Mammary epithelial cell (primary cell): ENCODE measurements at regions of chr9 and their contacts with region 1.

Region 1: GRCh38 chr9:94603259-94604160 is 9.9 kb upstream of the FBP2 start:
- DNase-seq: peak; percentile 70
- H3K4me3 ChIP-seq: no peak overlapping the region
- H3K27ac ChIP-seq: no peak overlapping the region
- H3K4me1 ChIP-seq: no peaks in the 10 kb centered on the region
- H3K27me3 ChIP-seq: peaks cover 5% of the 10 kb centered on the region
- CTCF ChIP-seq: peak; percentile 63 to 85

Region 2: GRCh38 chr9:94014065-94014654 is 589.4 kb before region 1 on chr9:
- CTCF ChIA-PET with region 1: no interaction called
- dilution Hi-C with region 1: no loop called
- in situ Hi-C with region 1: no loop called
- intact Hi-C with region 1: loop called (anchors 5 kb)
- DNase-seq: peak; percentile 24
- H3K4me3 ChIP-seq: no peak overlapping the region
- H3K27ac ChIP-seq: no peak overlapping the region
- H3K4me1 ChIP-seq: no peaks in the 10 kb centered on the region
- H3K27me3 ChIP-seq: no peaks in the 10 kb centered on the region
- CTCF ChIP-seq: peak; percentile 68 to 69

Region 3: DNA sequence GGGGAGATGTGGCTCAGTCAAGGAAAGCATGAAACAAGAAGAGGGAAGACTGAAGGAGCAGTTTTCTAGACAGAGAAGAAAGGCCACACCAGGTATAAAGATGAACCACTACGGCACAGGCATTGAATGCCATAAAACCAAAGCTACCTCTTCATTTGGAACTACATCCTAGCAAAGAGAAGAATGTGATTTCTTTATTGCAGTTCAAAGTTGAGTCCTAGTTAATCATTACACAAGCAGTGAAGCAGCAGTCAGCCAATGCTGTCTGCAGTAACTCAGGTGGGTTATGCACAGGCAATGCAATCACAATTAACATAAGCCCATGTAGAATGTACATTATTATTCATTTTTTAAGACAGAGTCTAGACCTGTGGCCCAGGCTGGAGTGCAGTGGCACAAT is 70.4 kb before region 1 on chr9:
- CTCF ChIA-PET with region 1: no interaction called
- dilution Hi-C with region 1: no loop called
- in situ Hi-C with region 1: no loop called
- intact Hi-C with region 1: no loop called
- DNase-seq: no peak
- H3K4me3 ChIP-seq: no peak overlapping the region
- H3K27ac ChIP-seq: no peak overlapping the region
- H3K4me1 ChIP-seq: no peaks in the 10 kb centered on the region
- H3K27me3 ChIP-seq: no peaks in the 10 kb centered on the region
- CTCF ChIP-seq: no peak

Region 4: DNA sequence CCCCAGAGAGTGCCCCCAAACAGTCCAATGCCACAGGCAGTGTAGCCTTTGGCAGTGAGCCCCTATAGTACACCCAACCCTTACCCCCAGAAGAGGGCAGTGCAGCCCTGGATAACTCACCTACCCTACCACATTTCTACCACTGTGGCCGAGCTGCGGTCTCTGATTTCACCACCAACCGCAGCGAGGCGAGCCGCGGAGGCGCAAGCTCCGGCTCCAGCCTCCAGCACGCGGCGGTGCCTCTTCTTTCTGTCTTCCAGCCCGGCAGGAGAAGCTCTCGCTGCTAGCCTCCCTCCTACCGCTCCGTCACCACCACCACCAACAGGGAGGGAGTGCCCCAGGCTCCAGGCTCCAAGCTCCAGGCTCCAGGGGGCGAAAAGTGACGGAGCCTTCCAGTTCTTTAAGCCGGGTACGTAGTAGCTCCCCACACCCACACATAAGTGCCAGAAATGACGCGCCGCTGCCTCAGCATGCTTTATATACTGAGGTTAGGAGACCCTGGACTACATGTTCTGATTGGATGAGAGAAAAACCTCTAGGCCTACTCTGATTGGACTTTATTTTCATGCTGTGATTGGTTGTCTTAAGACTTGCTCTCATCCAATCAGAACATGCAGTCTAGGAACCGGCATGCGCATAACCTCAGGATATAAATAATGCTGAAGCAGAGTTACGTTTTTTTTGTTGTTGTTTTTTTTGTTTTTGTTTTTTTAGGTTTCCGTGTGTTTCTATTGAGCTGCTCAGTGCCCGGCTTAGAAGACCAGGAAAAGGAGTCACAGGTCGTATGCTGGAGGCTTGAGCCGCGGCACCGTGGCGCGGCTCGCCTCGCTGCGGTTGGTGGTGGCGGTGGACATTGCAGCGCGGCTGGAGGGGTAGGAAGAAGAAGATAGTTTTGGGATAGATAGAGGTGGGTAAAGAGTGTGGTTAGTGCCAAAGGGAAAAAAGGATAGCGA is 48.8 kb before region 1 on chr9 and contains the start of gene PCAT7:
- CTCF ChIA-PET with region 1: interaction called, 3 read pairs
- dilution Hi-C with region 1: no loop called
- in situ Hi-C with region 1: no loop called
- intact Hi-C with region 1: loop called (anchors 1 kb)
- DNase-seq: no peak
- H3K4me3 ChIP-seq: no peak within 1 kb of the TSS
- H3K27ac ChIP-seq: no peak within 1 kb of the TSS
- H3K4me1 ChIP-seq: no peaks in the 10 kb centered on the region
- H3K27me3 ChIP-seq: no peaks in the 10 kb centered on the region
- CTCF ChIP-seq: peak; percentile 19 to 52
- total RNA-seq, gene PCAT7: 0.17 TPM in 1 of 2 donors, not detected in the other

Region 5: GRCh38 chr9:94639061-94639998 is 35.8 kb after region 1 on chr9 and contains the start of gene FBP1:
- CTCF ChIA-PET with region 1: no interaction called
- dilution Hi-C with region 1: no loop called
- in situ Hi-C with region 1: no loop called
- intact Hi-C with region 1: no loop called
- DNase-seq: no peak
- H3K4me3 ChIP-seq: peak within 1 kb of the TSS in 2 of 3 experiments; percentile 22 to 23
- H3K27ac ChIP-seq: no peak within 1 kb of the TSS
- H3K4me1 ChIP-seq: peaks cover 7% of the 10 kb centered on the region
- H3K27me3 ChIP-seq: peaks cover 11% of the 10 kb centered on the region
- CTCF ChIP-seq: no peak
- total RNA-seq, gene FBP1: 0.17 TPM in 1 of 2 donors, not detected in the other